WTC11 (cell line): ENCODE measurements at regions of chr12 and their contacts with region 1.

Region 1: GRCh38 chr12:4604684-4605193 is 42.7 kb downstream of the DYRK4 start:
- DNase-seq: peak; percentile 79
- ATAC-seq: peak; percentile 96
- H3K4me3 Mint-ChIP-seq: peak overlapping the region; percentile 94
- H3K27ac Mint-ChIP-seq: no peak overlapping the region
- H3K4me1 Mint-ChIP-seq: peaks cover 3% of the 10 kb centered on the region; the same call in 1 of the 2 replicates
- H3K27me3 Mint-ChIP-seq: peaks cover 21% of the 10 kb centered on the region
- CTCF ChIP-seq: peak; percentile 97

Region 2: GRCh38 chr12:4555804-4556203 is 48.9 kb before region 1 on chr12:
- CTCF ChIA-PET with region 1: no interaction called
- POLR2A ChIA-PET with region 1: no interaction called
- DNase-seq: no peak
- ATAC-seq: no peak
- H3K4me3 Mint-ChIP-seq: no peak overlapping the region
- H3K27ac Mint-ChIP-seq: no peak overlapping the region
- H3K4me1 Mint-ChIP-seq: no peaks in the 10 kb centered on the region
- H3K27me3 Mint-ChIP-seq: no peaks in the 10 kb centered on the region
- CTCF ChIP-seq: no peak

Region 3: DNA sequence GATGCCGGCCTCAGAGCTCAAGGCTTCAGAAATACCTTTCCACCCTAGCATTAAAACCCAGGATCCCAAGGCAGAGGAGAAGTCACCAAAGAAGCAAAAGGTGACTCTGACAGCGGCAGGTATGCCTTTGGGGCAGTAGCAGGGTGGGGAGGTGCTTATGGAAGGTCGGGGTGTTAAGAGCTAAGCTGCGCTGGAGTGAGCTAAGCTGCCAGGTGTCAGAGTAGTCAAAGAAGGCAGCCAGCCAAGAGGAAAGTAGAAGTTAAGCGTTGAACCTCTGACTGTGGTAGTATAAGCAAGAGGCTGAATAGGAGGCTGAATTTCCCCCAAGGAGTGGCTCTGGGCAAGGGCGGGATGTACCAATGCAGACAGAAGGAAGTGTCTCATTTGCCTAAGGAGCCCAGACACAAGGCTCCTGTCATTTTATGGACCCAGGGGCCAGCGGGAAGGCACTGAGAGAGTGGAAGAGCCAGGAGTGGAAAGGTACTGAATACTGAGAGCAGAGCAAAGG is 13.5 kb before region 1 on chr12:
- CTCF ChIA-PET with region 1: interaction called, 38 read pairs
- POLR2A ChIA-PET with region 1: no interaction called
- DNase-seq: no peak
- ATAC-seq: no peak
- H3K4me3 Mint-ChIP-seq: no peak overlapping the region
- H3K27ac Mint-ChIP-seq: no peak overlapping the region
- H3K4me1 Mint-ChIP-seq: peaks cover 10% of the 10 kb centered on the region
- H3K27me3 Mint-ChIP-seq: no peaks in the 10 kb centered on the region; the same call in 1 of the 2 replicates
- CTCF ChIP-seq: no peak

Region 4: DNA sequence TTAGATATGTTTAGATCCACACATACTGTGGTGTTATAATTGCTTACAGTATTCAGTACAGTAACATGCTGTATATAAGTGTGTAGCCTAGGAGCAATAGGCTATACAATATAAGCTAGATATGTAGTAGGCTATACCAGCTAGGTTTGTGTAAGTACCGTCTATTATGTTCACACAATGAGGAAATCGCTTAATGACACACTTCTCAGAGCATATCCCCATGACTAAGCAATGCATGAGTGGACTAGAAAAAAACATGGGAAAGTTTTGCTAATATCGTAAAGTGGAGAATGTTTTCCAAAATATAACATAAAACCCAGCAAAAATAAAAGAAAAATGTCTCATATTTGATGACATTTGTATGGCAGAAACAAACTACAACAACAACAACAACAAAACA is 16.8 kb after region 1 on chr12:
- CTCF ChIA-PET with region 1: interaction called, 10 read pairs
- POLR2A ChIA-PET with region 1: no interaction called
- DNase-seq: no peak
- ATAC-seq: no peak
- H3K4me3 Mint-ChIP-seq: no peak overlapping the region
- H3K27ac Mint-ChIP-seq: no peak overlapping the region
- H3K4me1 Mint-ChIP-seq: no peaks in the 10 kb centered on the region
- H3K27me3 Mint-ChIP-seq: peaks cover 4% of the 10 kb centered on the region
- CTCF ChIP-seq: no peak

Region 5: DNA sequence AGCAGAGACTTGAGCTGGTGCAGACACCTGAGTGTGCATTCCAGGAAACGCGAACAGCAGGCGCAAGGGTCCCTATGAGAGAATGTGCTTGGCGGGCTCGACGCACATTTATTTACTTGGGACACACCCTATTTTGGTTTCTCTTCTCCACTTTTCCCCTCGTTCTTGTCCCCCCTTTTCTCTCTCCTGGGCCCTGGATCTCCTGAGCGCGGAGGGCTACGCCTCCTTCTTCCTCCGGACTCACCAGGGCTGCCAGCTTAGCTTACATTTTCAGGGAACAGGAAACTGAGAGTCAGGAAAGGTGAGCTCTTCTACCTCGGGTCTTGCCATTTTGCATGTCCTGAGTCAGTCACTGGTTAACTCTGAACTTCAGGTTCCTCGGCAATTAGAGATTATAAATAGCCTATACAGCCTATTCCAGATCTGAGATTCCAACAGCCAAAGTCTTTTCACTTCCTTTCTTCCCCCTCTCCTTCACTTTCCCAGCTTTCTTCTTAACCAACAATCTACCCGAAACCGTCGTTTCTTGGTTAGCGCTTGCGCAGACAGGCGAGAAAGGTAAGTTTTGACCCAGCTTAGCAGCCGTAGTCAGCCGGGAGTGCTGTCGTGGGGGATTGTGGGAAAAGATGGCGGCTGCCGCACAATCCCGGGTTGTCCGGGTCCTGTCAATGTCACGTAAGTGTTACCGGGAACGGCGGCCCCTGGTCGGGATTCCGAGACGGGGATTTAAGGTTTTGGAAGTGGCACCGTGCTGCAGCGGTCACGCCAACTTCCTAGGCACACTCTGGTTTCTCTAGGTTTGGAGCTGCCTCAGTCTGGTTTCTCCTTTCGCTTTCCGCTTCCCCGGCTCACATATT is 44.0 kb after region 1 on chr12 and contains the starts of genes AKAP3 and NDUFA9:
- CTCF ChIA-PET with region 1: interaction called, 12 read pairs
- POLR2A ChIA-PET with region 1: no interaction called
- DNase-seq: peak; percentile 80
- ATAC-seq: peak; percentile 92
- H3K4me3 Mint-ChIP-seq: peak within 1 kb of the TSS; percentile 99
- H3K27ac Mint-ChIP-seq: peak within 1 kb of the TSS; percentile 99
- H3K4me1 Mint-ChIP-seq: peaks cover 40% of the 10 kb centered on the region
- H3K27me3 Mint-ChIP-seq: no peaks in the 10 kb centered on the region
- CTCF ChIP-seq: no peak
- total RNA-seq, gene AKAP3: 1.8 to 2.6 TPM (median 1.9 TPM) in 3 replicates
- total RNA-seq, gene NDUFA9: 65.8 to 97.8 TPM (median 71.4 TPM) in 3 replicates